CD8-positive, alpha-beta T cell (primary cell): ENCODE measurements at regions of chr1 and their contacts with region 1.

Region 1: DNA sequence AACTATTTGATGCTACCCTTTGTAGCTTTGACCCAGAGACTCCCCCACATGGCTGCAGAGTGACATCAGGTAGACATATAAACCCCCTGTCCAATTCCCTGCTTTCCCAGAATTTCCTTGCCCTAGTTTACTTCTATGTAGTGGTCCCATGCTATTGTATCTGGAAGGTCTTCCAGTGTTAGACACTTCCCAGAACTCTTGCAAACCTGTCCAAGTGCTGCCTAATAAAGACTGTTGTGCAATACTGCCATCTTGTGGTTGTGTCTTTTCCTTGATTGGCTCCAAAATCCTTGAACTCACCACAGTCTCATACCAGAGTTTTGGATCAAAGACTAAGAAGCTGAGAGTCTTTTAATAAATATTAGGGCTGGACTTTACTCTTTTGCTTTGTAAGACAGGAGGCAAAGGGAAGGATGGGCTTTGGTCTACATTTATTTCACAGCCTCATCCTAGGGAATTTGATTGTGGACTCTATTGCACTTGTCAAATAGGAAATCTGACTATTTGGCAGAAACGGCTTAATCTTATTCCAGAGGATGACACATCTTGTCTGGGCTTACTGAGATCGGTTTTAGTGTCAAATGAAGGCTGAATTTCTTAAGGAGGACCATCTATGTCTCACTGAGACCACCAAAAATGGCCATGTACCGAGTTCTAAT is 169.9 kb downstream of the LRRC7 start:
- DNase-seq: peak in 2 of 9 experiments; percentile 7 to 49
- ATAC-seq: no peak
- H3K4me3 ChIP-seq: no peak overlapping the region
- H3K4me3 Mint-ChIP-seq: no peak overlapping the region
- H3K27ac ChIP-seq: no peak overlapping the region
- H3K27ac Mint-ChIP-seq: no peak overlapping the region
- H3K4me1 ChIP-seq: no peaks in the 10 kb centered on the region
- H3K4me1 Mint-ChIP-seq: no peaks in the 10 kb centered on the region
- H3K27me3 ChIP-seq: no peaks in the 10 kb centered on the region
- H3K27me3 Mint-ChIP-seq: no peaks in the 10 kb centered on the region
- CTCF ChIP-seq: no peak

Region 2: GRCh38 chr1:67766141-67766978 is 1971.3 kb before region 1 on chr1:
- CTCF ChIA-PET with region 1: no interaction called
- POLR2A ChIA-PET with region 1: no interaction called
- intact Hi-C with region 1: loop called in 1 of 2 experiments (anchors 5 kb)
- DNase-seq: peak in 7 of 9 experiments; percentile 1 to 53 (median 34)
- ATAC-seq: peak; percentile 61
- H3K4me3 ChIP-seq: peak overlapping the region; percentile 23 to 38
- H3K4me3 Mint-ChIP-seq: peak overlapping the region; percentile 61
- H3K27ac ChIP-seq: no peak overlapping the region
- H3K27ac Mint-ChIP-seq: no peak overlapping the region
- H3K4me1 ChIP-seq: peaks cover 3% of the 10 kb centered on the region
- H3K4me1 Mint-ChIP-seq: peaks cover 6% of the 10 kb centered on the region
- H3K27me3 ChIP-seq: peaks cover 0 to 3% of the 10 kb centered on the region in 2 experiments
- H3K27me3 Mint-ChIP-seq: peaks cover 33% of the 10 kb centered on the region
- CTCF ChIP-seq: peak; percentile 75

Region 3: DNA sequence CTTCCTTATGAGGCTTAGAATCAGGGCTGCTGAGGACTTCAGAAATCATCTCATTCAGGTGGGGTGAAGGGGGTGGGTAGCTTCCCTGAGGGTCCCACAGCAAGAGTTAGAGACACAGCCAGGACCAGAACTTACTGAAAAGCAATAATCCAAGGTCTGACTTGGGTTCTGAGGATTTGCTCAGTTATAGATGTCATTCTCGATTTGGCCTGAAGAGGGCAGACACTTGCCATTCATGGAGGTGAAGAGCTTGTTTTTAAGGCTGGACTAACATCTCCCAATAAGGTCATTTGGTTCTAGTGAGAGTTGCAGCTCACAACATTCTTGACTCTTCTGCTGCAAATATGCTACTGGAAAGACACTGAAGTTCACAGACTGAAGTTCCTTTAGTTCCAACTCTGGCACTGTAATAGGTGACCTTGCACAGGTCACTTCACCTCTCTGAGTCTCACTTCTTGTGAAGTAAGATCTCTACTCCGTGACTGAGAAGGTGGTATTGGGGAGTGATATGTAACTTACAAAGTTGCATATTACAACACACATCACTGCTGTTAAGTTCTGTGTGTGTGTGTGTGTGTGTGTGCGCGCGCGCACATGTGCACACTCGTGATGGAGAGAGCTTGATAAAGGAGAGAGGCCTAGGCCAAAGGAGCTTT is 1617.4 kb before region 1 on chr1:
- CTCF ChIA-PET with region 1: no interaction called
- POLR2A ChIA-PET with region 1: no interaction called
- intact Hi-C with region 1: loop called in 1 of 2 experiments (anchors 2 kb)
- DNase-seq: peak in 3 of 9 experiments; percentile 20 to 52 (median 37)
- ATAC-seq: no peak
- H3K4me3 ChIP-seq: no peak overlapping the region
- H3K4me3 Mint-ChIP-seq: no peak overlapping the region
- H3K27ac ChIP-seq: no peak overlapping the region
- H3K27ac Mint-ChIP-seq: no peak overlapping the region
- H3K4me1 ChIP-seq: no peaks in the 10 kb centered on the region
- H3K4me1 Mint-ChIP-seq: peaks cover 7% of the 10 kb centered on the region
- H3K27me3 ChIP-seq: no peaks in the 10 kb centered on the region
- H3K27me3 Mint-ChIP-seq: peaks cover 7% of the 10 kb centered on the region
- CTCF ChIP-seq: peak; percentile 48

Region 4: GRCh38 chr1:69567652-69568420 is 169.8 kb before region 1 on chr1 and contains the start of gene LRRC7:
- CTCF ChIA-PET with region 1: no interaction called
- POLR2A ChIA-PET with region 1: no interaction called
- intact Hi-C with region 1: loop called in 1 of 2 experiments (anchors 10 kb)
- DNase-seq: peak in 2 of 9 experiments; percentile 17 to 34
- ATAC-seq: no peak
- H3K4me3 ChIP-seq: peak within 1 kb of the TSS; percentile 15 to 24
- H3K4me3 Mint-ChIP-seq: peak within 1 kb of the TSS; percentile 82
- H3K27ac ChIP-seq: no peak within 1 kb of the TSS
- H3K27ac Mint-ChIP-seq: peak within 1 kb of the TSS; percentile 37
- H3K4me1 ChIP-seq: no peaks in the 10 kb centered on the region
- H3K4me1 Mint-ChIP-seq: no peaks in the 10 kb centered on the region
- H3K27me3 ChIP-seq: peaks cover 0 to 3% of the 10 kb centered on the region in 2 experiments
- H3K27me3 Mint-ChIP-seq: peaks cover 29% of the 10 kb centered on the region
- CTCF ChIP-seq: no peak
- total RNA-seq, gene LRRC7: 2.3 to 3.1 TPM

Region 5: GRCh38 chr1:70101774-70102173 is 364.1 kb after region 1 on chr1:
- CTCF ChIA-PET with region 1: no interaction called
- POLR2A ChIA-PET with region 1: no interaction called
- intact Hi-C with region 1: no loop called
- DNase-seq: no peak
- ATAC-seq: no peak
- H3K4me3 ChIP-seq: no peak overlapping the region
- H3K4me3 Mint-ChIP-seq: no peak overlapping the region
- H3K27ac ChIP-seq: no peak overlapping the region
- H3K27ac Mint-ChIP-seq: no peak overlapping the region
- H3K4me1 ChIP-seq: no peaks in the 10 kb centered on the region
- H3K4me1 Mint-ChIP-seq: no peaks in the 10 kb centered on the region
- H3K27me3 ChIP-seq: no peaks in the 10 kb centered on the region
- H3K27me3 Mint-ChIP-seq: peaks cover 4% of the 10 kb centered on the region
- CTCF ChIP-seq: no peak